ENCODE measurements at regions of chr10 and their contacts with region 1.

Region 1: GRCh38 chr10:49592726-49593563 is 17.2 kb upstream of the SLC18A3 start:
- DNase-seq: peak; percentile 60
- ATAC-seq: peak; percentile 87
- H3K4me3 ChIP-seq: no peak overlapping the region
- H3K27ac ChIP-seq: no peak overlapping the region
- H3K4me1 ChIP-seq: peaks cover 2% of the 10 kb centered on the region; the same call in 1 of the 2 replicates
- H3K27me3 ChIP-seq: peaks cover 2% of the 10 kb centered on the region; the same call in 1 of the 2 replicates
- CTCF ChIP-seq: peak; percentile 98

Region 2: GRCh38 chr10:49446031-49446430 is 146.9 kb before region 1 on chr10:
- CTCF ChIA-PET with region 1: no interaction called
- POLR2A ChIA-PET with region 1: no interaction called
- in situ Hi-C with region 1: no loop called
- intact Hi-C with region 1: no loop called
- DNase-seq: no peak
- ATAC-seq: no peak
- H3K4me3 ChIP-seq: no peak overlapping the region
- H3K27ac ChIP-seq: no peak overlapping the region
- H3K4me1 ChIP-seq: no peaks in the 10 kb centered on the region
- H3K27me3 ChIP-seq: no peaks in the 10 kb centered on the region
- CTCF ChIP-seq: no peak

Region 3: GRCh38 chr10:49538381-49539319 is 54.3 kb before region 1 on chr10 and contains the start of gene ERCC6:
- CTCF ChIA-PET with region 1: no interaction called
- POLR2A ChIA-PET with region 1: no interaction called
- in situ Hi-C with region 1: no loop called
- intact Hi-C with region 1: no loop called
- DNase-seq: peak; percentile 91
- ATAC-seq: peak; percentile 98
- H3K4me3 ChIP-seq: peak within 1 kb of the TSS; percentile 78 to 98
- H3K27ac ChIP-seq: peak within 1 kb of the TSS; percentile 82
- H3K4me1 ChIP-seq: peaks cover 10% of the 10 kb centered on the region; the same call in 1 of the 2 replicates
- H3K27me3 ChIP-seq: peaks cover 8% of the 10 kb centered on the region
- CTCF ChIP-seq: no peak
- total RNA-seq, gene ERCC6: 19.1 TPM

Region 4: DNA sequence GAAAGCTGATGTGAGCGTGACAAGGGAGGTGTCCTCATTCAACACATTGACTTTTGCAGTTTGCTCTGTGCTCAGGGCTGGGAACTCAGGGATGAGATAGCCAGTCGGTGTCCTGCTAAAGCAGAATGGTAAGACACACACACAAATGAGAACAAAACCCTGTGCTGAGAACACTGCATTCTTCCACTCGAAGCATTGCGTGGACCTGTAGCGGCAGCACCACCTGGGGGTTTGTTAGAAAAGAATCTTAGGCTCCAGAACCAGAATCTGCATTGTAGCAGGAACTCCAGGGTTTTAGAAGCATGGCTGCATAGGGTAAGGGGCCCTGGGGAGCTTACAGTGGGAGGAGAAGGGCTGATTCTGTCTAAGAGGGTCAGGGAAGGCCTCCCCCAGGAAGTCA is 190.7 kb after region 1 on chr10:
- CTCF ChIA-PET with region 1: no interaction called
- POLR2A ChIA-PET with region 1: no interaction called
- in situ Hi-C with region 1: no loop called
- intact Hi-C with region 1: loop called (anchors 5 kb)
- DNase-seq: no peak
- ATAC-seq: no peak
- H3K4me3 ChIP-seq: no peak overlapping the region
- H3K27ac ChIP-seq: no peak overlapping the region
- H3K4me1 ChIP-seq: no peaks in the 10 kb centered on the region
- H3K27me3 ChIP-seq: peaks cover 11% of the 10 kb centered on the region; the same call in 1 of the 2 replicates
- CTCF ChIP-seq: peak; percentile 30

Region 5: GRCh38 chr10:50224330-50224952 is 631.5 kb after region 1 on chr10:
- CTCF ChIA-PET with region 1: no interaction called
- POLR2A ChIA-PET with region 1: no interaction called
- in situ Hi-C with region 1: no loop called
- intact Hi-C with region 1: loop called (anchors 5 kb)
- DNase-seq: peak; percentile 35
- ATAC-seq: peak; percentile 96
- H3K4me3 ChIP-seq: no peak overlapping the region
- H3K27ac ChIP-seq: no peak overlapping the region
- H3K4me1 ChIP-seq: no peaks in the 10 kb centered on the region
- H3K27me3 ChIP-seq: peaks cover 13% of the 10 kb centered on the region; the same call in 1 of the 2 replicates
- CTCF ChIP-seq: peak; percentile 78

Measured in Panc1 (cell line).